Stomach (tissue), 19 donors: ENCODE measurements at regions of chr4 and their contacts with region 1.

Region 1: GRCh38 chr4:185039508-185040273 is 21.4 kb downstream of the HELT start:
- DNase-seq: peak; percentile 67 to 81
- H3K4me3 ChIP-seq: peak overlapping the region in 1 of 4 donors; percentile 3
- H3K27ac ChIP-seq: no peak overlapping the region
- H3K4me1 ChIP-seq: peaks cover 0 to 8% (median 4%) of the 10 kb centered on the region in 4 donors
- H3K27me3 ChIP-seq: peaks cover 0 to 6% (median 0%) of the 10 kb centered on the region in 3 donors
- CTCF ChIP-seq: peak in 5 of 7 experiments; percentile 69 to 93 (median 83)
- EP300 ChIP-seq: no peak
- POLR2A ChIP-seq: no peak

Region 2: GRCh38 chr4:184444953-184445309 is 594.8 kb before region 1 on chr4:
- intact Hi-C with region 1: no loop called
- DNase-seq: no peak
- H3K4me3 ChIP-seq: no peak overlapping the region
- H3K27ac ChIP-seq: no peak overlapping the region
- H3K4me1 ChIP-seq: peaks cover 44 to 97% (median 79%) of the 10 kb centered on the region in 4 donors
- H3K27me3 ChIP-seq: no peaks in the 10 kb centered on the region
- CTCF ChIP-seq: no peak
- EP300 ChIP-seq: no peak
- POLR2A ChIP-seq: no peak

Region 3: DNA sequence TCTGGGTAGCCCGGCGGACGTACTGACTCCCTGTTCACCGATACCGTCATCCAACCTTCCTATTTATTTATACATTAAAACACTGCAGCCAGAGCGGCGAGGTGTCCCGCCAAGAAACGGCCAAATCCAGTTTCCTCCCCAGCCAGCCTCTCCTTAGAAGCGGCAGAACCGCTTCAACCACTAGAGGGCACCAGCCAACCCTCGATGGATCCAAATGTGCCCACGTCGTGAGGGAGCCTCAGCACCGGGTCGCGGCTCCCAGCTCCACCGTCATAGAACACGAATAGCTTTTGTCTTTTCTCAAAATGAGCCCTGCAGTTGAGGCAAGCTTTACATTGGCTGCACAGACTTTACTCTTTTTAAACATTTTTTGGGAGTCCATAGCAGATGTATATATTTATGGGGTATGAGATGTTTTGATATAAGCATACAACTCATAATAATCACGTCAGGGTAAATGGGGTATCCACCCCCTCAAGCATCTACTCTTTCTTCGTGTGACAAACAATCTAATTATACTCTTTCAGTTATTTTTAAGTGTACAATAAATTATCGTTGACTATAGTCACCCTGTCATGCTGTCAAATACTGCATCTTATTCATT is 34.4 kb before region 1 on chr4:
- intact Hi-C with region 1: no loop called
- DNase-seq: peak; percentile 92 to 93
- H3K4me3 ChIP-seq: peak overlapping the region; percentile 20 to 46 (median 31)
- H3K27ac ChIP-seq: peak overlapping the region; percentile 31 to 57 (median 40)
- H3K4me1 ChIP-seq: peaks cover 8 to 14% (median 12%) of the 10 kb centered on the region in 4 donors
- H3K27me3 ChIP-seq: peaks cover 0 to 44% (median 0%) of the 10 kb centered on the region in 3 donors
- CTCF ChIP-seq: peak in 5 of 7 experiments; percentile 80 to 95 (median 81)
- EP300 ChIP-seq: no peak
- POLR2A ChIP-seq: no peak

Region 4: DNA sequence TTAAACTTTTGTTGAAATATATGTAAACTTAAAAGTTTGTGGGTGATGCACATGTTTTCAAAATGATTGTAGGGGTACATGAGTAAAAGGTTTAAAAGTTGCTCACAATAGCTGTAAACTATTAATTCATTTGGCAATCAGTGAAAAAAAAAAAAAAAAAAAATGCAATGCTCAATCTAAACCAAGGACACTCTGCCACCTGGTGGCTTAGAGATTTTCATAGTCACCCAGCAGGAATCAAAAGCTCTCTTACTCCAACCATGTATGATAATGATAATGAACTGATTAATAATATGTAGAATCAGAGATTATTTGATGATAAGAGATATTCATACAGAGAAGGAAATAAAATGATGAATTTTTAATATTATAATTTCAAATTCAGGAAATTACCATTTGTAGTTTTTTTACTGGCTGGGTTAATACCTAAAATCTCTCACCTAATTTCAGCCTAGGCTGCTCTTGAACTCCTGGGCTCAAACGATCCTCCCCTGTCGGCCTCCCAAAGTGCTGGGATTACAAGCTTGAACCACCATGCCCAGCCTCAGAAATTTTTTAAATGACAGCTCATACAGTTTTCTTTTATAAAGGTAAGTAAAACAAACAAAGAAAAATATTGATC is 56.5 kb after region 1 on chr4:
- intact Hi-C with region 1: loop called (anchors 10 kb)
- DNase-seq: peak; percentile 45 to 81
- H3K4me3 ChIP-seq: no peak overlapping the region
- H3K27ac ChIP-seq: no peak overlapping the region
- H3K4me1 ChIP-seq: no peaks in the 10 kb centered on the region
- H3K27me3 ChIP-seq: peaks cover 0 to 6% (median 0%) of the 10 kb centered on the region in 3 donors
- CTCF ChIP-seq: peak in 5 of 7 experiments; percentile 24 to 62 (median 47)
- EP300 ChIP-seq: no peak
- POLR2A ChIP-seq: no peak

Region 5: DNA sequence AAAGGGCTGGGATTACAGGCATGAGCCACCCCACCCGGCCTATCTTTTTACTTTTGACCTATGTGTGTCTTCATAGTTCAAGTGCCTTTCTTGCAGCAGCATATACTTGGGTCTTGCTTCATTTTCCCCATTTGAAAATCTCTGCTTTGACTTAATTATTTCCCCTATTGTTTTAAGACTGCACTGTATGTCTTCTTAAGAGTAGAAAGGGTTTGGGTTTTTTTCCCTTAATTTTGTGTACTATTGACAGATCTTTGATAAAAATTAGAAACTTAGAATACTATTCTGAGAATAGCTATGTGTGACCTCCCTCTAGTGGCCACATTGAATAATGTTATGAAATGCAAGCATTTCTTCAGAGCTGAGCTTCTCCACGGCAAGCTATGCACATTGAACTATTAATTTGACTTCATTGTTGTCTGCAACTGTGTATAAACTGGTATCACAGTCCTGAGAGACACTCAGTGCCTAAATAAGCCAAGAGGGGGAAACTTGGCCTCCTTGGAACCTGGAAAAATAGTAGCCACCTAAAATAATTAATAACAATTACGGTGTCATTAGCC is 94.7 kb after region 1 on chr4:
- intact Hi-C with region 1: loop called (anchors 10 kb)
- DNase-seq: peak in 1 of 2 donors; percentile 74
- H3K4me3 ChIP-seq: no peak overlapping the region
- H3K27ac ChIP-seq: no peak overlapping the region
- H3K4me1 ChIP-seq: peaks cover 0 to 7% (median 0%) of the 10 kb centered on the region in 4 donors
- H3K27me3 ChIP-seq: peaks cover 0 to 5% (median 0%) of the 10 kb centered on the region in 3 donors
- CTCF ChIP-seq: peak in 4 of 7 experiments; percentile 40 to 73 (median 70)
- EP300 ChIP-seq: no peak
- POLR2A ChIP-seq: no peak